Ovary (tissue), 10 donors: ENCODE measurements at regions of chr3 and their contacts with region 1.

Region 1: DNA sequence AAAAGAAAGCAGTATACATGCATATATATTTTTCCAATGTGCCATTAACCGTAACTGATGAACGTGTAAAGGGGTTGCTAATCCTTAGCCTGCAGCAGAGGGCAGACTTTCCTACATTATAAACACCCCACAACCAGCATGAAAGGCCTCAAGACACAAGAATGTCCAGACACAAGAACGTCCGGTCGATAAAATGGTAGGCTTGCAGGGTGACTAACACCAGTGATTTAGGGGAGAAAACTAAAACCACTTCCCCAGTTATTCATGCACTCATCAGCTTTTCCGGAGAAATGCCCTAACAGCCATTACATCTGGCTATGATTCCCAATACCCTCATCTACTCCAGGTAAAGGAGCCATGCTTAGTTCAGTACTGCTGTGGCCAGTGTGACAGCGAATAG is 57.4 kb downstream of the LRTM1 start:
- DNase-seq: peak in 2 of 5 donors; percentile 22 to 30
- H3K4me3 ChIP-seq: no peak overlapping the region
- H3K27ac ChIP-seq: no peak overlapping the region
- H3K4me1 ChIP-seq: peaks cover 2% of the 10 kb centered on the region
- H3K27me3 ChIP-seq: no peaks in the 10 kb centered on the region
- CTCF ChIP-seq: peak in 2 of 3 donors; percentile 42 to 50
- EP300 ChIP-seq: no peak
- POLR2A ChIP-seq: no peak

Region 2: GRCh38 chr3:55160241-55160983 is 290.0 kb after region 1 on chr3:
- intact Hi-C with region 1: loop called in 1 of 4 experiments (anchors 10 kb)
- DNase-seq: no peak
- H3K4me3 ChIP-seq: no peak overlapping the region
- H3K27ac ChIP-seq: no peak overlapping the region
- H3K4me1 ChIP-seq: peaks cover 2% of the 10 kb centered on the region
- H3K27me3 ChIP-seq: no peaks in the 10 kb centered on the region
- CTCF ChIP-seq: no peak
- EP300 ChIP-seq: no peak
- POLR2A ChIP-seq: no peak